Activated naive CD4-positive, alpha-beta T cell treated with anti-CD3 and anti-CD28 coated beads for 36 hours (primary cell): ENCODE measurements at regions of chr11 and their contacts with region 1.

Region 1: DNA sequence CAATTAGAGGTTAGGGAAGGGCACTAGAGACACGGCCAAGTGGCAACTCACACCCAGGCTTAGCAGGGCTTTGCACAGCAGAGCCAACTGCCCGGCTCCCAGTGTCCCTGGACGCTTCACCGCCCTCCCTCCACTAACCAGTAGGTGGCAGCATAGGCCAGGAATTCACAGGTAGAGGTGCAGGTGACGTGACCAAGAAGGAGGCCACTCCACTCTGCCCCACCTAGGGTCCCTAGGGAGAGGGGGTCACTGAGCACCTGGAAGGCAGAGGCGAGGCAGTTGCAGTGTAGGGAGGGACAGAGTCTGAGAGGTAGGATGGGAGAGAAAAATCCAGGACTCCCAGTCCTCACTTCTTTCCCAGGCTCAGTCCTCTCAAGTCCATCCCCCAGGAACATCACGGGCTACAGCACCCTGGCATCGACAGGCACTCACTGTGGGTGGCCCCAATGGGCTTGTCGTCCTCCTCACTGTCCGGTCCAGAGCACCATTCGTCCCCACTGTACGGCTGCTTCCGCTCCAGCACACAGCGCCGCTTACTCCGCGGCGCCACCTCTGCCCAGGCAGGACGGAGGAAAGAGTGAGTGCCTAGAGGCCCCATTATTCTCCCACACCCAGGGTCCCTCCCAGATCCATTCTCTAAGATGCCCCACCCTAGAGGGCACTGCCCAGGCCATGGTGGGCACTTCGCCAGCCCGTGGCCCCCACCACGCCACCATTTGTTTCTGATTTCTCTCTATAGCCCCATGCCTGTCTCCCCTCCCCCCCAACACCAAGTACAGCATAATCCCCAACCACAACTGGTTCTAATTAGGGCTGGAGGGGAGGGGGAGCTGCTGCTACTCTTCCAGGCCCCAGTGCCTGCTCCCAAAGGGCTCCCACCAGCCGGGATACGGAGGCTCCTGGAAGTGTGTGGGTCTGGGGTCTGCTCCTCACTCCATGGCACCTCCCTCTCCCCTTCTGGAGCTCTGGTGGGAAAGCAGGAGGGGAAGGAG is 18.4 kb downstream of the BCL9L start:
- DNase-seq: peak; percentile 96
- H3K4me3 Mint-ChIP-seq: no peak overlapping the region
- H3K27ac Mint-ChIP-seq: peak overlapping the region; percentile 80
- H3K4me1 Mint-ChIP-seq: peaks cover 45% of the 10 kb centered on the region
- H3K27me3 Mint-ChIP-seq: no peaks in the 10 kb centered on the region

Region 2: GRCh38 chr11:118689851-118690552 is 217.3 kb before region 1 on chr11:
- CTCF ChIA-PET with region 1: interaction called, 15 read pairs
- intact Hi-C with region 1: no loop called
- DNase-seq: peak; percentile 96
- H3K4me3 Mint-ChIP-seq: peak overlapping the region; percentile 77
- H3K27ac Mint-ChIP-seq: peak overlapping the region; percentile 82
- H3K4me1 Mint-ChIP-seq: peaks cover 46% of the 10 kb centered on the region
- H3K27me3 Mint-ChIP-seq: no peaks in the 10 kb centered on the region

Region 3: GRCh38 chr11:118845369-118845768 is 62.0 kb before region 1 on chr11:
- CTCF ChIA-PET with region 1: interaction called, 3 read pairs
- intact Hi-C with region 1: loop called (anchors 2 kb)
- DNase-seq: peak; percentile 69
- H3K4me3 Mint-ChIP-seq: no peak overlapping the region
- H3K27ac Mint-ChIP-seq: peak overlapping the region; percentile 63
- H3K4me1 Mint-ChIP-seq: peaks cover 38% of the 10 kb centered on the region
- H3K27me3 Mint-ChIP-seq: no peaks in the 10 kb centered on the region

Region 4: GRCh38 chr11:118878163-118878563 is 29.2 kb before region 1 on chr11:
- CTCF ChIA-PET with region 1: interaction called, 3 read pairs
- intact Hi-C with region 1: loop called (anchors 2 kb)
- DNase-seq: peak; percentile 63
- H3K4me3 Mint-ChIP-seq: peak overlapping the region; percentile 31
- H3K27ac Mint-ChIP-seq: peak overlapping the region; percentile 99
- H3K4me1 Mint-ChIP-seq: peaks cover 96% of the 10 kb centered on the region
- H3K27me3 Mint-ChIP-seq: no peaks in the 10 kb centered on the region

Region 5: DNA sequence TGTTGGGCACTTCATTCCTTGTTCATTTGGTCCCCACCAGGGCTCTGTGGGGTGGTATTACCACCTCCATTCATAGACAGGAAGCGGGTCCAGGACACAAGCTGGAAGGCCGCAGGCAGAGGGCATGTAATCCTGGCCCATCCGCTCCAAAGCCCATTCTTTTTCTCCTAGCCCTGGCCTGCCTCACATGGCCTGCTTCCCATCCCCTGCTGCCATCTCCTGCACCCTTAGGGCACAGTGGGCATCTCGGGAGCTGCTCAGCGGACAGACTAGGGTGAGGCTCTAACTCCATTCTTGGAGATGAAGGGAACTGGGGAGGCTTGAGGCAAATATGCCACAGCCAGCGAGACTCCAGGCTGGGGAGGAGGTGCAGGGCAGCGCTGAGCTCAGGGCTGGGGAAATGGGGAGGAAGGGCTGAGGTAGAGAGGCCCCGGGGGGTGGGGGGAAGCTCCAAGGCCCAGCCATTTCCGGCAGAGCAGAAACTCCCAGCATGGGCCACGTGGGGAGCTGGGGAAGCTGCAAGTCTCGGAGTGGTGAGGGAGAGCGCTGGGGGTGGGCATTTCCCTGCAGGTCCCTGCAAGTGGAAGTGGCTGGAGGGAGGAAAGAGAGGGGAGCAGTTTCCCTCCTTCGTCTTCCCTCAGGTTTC is 32.7 kb after region 1 on chr11:
- CTCF ChIA-PET with region 1: interaction called, 9 read pairs
- intact Hi-C with region 1: loop called (anchors 5 kb)
- DNase-seq: peak; percentile 90
- H3K4me3 Mint-ChIP-seq: peak overlapping the region; percentile 55
- H3K27ac Mint-ChIP-seq: peak overlapping the region; percentile 56
- H3K4me1 Mint-ChIP-seq: peaks cover 36% of the 10 kb centered on the region
- H3K27me3 Mint-ChIP-seq: no peaks in the 10 kb centered on the region

Region 6: DNA sequence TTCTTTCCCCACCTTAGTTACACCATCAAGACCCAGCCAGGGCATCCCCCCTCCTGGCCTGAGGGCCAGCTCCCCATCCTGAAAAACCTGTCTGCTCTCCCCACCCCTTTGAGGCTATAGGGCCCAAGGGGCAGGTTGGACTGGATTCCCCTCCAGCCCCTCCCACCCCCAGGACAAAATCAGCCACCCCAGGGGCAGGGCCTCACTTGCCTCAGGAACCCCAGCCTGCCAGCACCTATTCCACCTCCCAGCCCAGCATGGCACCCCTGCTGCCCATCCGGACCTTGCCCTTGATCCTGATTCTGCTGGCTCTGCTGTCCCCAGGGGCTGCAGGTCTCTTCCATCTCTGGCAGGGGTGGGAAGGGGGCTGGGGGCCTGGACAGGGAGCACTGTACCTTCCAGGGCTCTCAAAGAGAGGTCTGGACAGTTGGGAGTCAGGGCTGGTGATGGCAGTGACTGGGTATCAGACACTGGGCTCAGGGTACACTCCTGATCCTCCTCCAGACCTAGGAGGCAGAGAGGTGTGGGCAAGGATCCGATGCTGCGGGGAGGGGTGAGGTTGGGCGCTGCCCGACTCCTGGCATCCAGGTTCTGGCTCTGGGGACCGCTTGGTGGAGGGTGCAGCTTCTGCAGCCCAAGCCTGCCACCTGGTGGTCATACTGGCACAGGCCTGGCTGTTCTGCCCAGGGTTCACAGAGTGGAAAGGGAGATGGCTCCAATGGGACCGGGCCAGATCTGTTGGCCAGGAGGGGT is 48.9 kb after region 1 on chr11 and contains the start of gene UPK2:
- CTCF ChIA-PET with region 1: interaction called, 14 read pairs
- intact Hi-C with region 1: loop called (anchors 1 kb)
- DNase-seq: peak; percentile 95
- H3K4me3 Mint-ChIP-seq: no peak within 1 kb of the TSS
- H3K27ac Mint-ChIP-seq: no peak within 1 kb of the TSS
- H3K4me1 Mint-ChIP-seq: peaks cover 5% of the 10 kb centered on the region
- H3K27me3 Mint-ChIP-seq: no peaks in the 10 kb centered on the region
- total RNA-seq, gene UPK2: 0.25 to 0.45 TPM

Region 7: DNA sequence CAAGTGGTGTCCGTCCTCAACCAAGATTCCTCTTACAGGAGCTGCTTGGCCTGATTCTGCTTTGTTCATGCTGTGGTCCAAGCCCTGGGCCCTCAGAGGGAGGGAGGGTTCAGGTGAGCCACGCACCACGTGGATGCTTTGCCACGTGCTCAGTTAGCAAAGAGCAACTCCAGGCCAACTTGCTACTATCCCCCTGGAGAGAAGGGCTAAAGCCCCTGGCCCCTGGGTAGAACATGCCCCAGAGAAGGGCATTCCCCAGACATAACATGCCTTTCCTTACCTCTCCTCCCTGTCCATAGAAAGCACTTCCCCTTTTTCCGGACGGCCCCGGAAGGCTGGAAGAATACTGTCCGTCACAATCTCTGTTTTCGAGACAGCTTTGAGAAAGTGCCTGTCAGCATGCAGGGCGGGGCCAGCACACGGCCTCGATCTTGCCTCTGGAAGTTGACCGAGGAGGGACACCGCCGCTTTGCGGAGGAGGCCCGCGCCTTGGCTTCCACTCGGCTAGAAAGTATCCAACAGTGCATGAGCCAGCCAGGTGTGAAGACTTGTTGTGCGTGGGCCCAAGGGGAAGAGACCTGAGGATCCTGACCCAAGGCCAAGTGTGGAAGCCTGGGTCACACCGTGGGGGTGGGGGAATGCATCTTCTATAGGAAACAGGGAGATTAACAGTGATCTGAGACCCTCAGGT is 73.0 kb after region 1 on chr11:
- CTCF ChIA-PET with region 1: no interaction called
- intact Hi-C with region 1: no loop called
- DNase-seq: no peak
- H3K4me3 Mint-ChIP-seq: no peak overlapping the region
- H3K27ac Mint-ChIP-seq: no peak overlapping the region
- H3K4me1 Mint-ChIP-seq: no peaks in the 10 kb centered on the region
- H3K27me3 Mint-ChIP-seq: no peaks in the 10 kb centered on the region

Region 8: GRCh38 chr11:119030329-119031049 is 123.1 kb after region 1 on chr11 and contains the start of gene SLC37A4:
- CTCF ChIA-PET with region 1: no interaction called
- intact Hi-C with region 1: loop called (anchors 2 kb)
- DNase-seq: peak; percentile 99
- H3K4me3 Mint-ChIP-seq: peak within 1 kb of the TSS; percentile 77
- H3K27ac Mint-ChIP-seq: peak within 1 kb of the TSS; percentile 85
- H3K4me1 Mint-ChIP-seq: peaks cover 23% of the 10 kb centered on the region
- H3K27me3 Mint-ChIP-seq: no peaks in the 10 kb centered on the region
- total RNA-seq, gene SLC37A4: 28.3 to 30.3 TPM

Region 9: DNA sequence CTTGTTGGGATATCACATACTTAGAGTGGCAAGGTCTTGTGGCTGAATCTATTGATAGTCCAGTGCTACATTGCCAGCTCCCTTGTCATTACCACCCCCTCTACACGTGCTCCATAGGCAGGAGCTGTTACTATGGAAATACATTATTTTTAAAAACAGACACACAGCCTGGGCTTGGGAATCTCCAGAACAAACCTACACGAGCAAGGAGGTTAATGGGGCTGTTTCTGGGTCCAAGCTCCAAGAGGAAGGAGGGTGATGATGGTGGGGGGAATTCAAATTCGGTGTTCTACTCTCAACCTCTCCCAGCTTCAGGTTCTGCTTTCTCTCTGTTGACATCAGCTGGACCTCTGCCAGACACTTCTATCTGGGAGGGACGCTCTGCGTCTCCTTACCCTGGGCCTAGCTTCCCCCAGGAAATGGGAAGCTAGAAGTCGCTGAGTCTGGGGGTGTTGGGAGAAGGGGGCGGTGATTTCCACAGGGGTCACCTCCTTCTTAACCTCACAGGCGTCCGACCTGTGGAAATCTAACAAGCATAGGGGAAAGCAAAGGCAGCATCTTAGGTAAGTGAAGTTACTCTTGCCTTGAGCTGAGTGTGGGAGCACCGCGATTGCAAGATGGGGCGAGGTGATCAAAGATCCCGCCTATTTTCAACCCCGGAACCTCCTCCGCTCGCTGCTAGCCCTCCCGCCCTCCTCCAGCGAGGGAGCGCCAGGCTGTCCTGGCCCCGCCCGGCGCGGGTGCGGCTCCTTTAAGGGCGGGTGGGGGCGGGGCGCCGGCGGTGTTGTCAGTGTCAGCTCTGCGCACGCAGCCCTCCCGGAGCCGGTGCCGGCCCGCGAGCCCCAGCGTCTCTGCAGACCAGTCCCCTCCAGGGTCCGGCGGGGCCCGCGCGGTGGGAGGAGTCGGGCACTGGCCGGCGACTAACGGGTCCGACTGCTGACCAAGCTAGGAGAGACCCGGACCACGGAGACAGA is 199.5 kb after region 1 on chr11 and contains the start of gene C2CD2L:
- CTCF ChIA-PET with region 1: no interaction called
- intact Hi-C with region 1: no loop called
- DNase-seq: peak; percentile 94
- H3K4me3 Mint-ChIP-seq: peak within 1 kb of the TSS; percentile 93
- H3K27ac Mint-ChIP-seq: peak within 1 kb of the TSS; percentile 95
- H3K4me1 Mint-ChIP-seq: peaks cover 38% of the 10 kb centered on the region
- H3K27me3 Mint-ChIP-seq: no peaks in the 10 kb centered on the region
- total RNA-seq, gene C2CD2L: 20.1 to 20.8 TPM